ENCODE measurements at regions of chr2 and their contacts with region 1.

Region 1: DNA sequence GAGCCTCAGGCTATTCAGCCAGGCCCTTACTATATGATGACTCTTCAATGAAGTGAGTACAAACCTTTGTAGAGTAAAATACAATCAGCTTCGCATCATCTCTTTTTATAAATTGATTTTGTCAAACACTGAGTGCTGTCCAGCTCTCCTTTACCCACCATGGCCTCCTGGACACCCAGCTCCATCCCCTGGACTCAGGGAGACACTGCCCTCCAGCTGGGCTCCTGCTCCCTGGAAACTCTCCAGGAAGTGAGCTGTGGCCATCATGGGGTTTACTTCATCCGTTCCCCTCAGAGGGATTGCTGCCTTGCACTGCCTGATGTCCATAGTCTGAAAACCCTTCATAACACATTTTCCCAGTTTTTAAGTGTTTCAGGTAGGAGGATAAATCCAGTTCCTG is 82.5 kb upstream of the XIRP2 start:
- DNase-seq: peak; percentile 24
- ATAC-seq: peak; percentile 96
- H3K4me3 ChIP-seq: no peak overlapping the region
- H3K27ac ChIP-seq: no peak overlapping the region
- H3K4me1 ChIP-seq: no peaks in the 10 kb centered on the region
- H3K27me3 ChIP-seq: no peaks in the 10 kb centered on the region
- CTCF ChIP-seq: peak; percentile 81
- EP300 ChIP-seq: no peak
- POLR2A ChIP-seq: no peak
- RAD21 ChIP-seq: peak; percentile 70

Region 2: GRCh38 chr2:166627893-166628292 is 177.9 kb before region 1 on chr2:
- CTCF ChIA-PET with region 1: no interaction called
- POLR2A ChIA-PET with region 1: no interaction called
- in situ Hi-C with region 1: no loop called
- intact Hi-C with region 1: loop called (anchors 5 kb)
- DNase-seq: no peak
- ATAC-seq: peak; percentile 59
- H3K4me3 ChIP-seq: no peak overlapping the region
- H3K27ac ChIP-seq: no peak overlapping the region
- H3K4me1 ChIP-seq: no peaks in the 10 kb centered on the region
- H3K27me3 ChIP-seq: no peaks in the 10 kb centered on the region
- CTCF ChIP-seq: peak; percentile 29
- EP300 ChIP-seq: no peak
- POLR2A ChIP-seq: no peak
- RAD21 ChIP-seq: no peak

Region 3: DNA sequence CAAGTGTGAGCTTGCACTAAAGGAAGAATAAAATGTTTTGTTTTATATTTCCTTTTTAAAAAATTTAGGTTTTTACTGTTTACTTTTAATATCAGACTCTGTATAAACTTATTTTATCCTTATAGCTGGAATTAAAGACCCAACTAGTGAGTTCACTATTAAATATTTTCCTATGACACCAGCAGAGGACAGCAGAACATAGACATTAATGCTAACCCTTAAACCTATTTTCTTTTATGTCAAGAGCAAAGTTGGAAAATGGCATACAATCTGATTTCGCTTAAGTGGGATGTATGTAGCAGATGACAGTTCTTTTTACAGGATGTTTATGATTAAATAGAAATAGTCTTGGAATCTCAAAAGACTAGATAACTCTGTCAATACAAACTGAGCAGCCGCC is 105.7 kb before region 1 on chr2:
- CTCF ChIA-PET with region 1: no interaction called
- POLR2A ChIA-PET with region 1: no interaction called
- in situ Hi-C with region 1: no loop called
- intact Hi-C with region 1: loop called (anchors 5 kb)
- DNase-seq: no peak
- ATAC-seq: no peak
- H3K4me3 ChIP-seq: no peak overlapping the region
- H3K27ac ChIP-seq: no peak overlapping the region
- H3K4me1 ChIP-seq: no peaks in the 10 kb centered on the region
- H3K27me3 ChIP-seq: no peaks in the 10 kb centered on the region
- CTCF ChIP-seq: peak; percentile 56
- EP300 ChIP-seq: no peak
- POLR2A ChIP-seq: no peak
- RAD21 ChIP-seq: no peak

Region 4: DNA sequence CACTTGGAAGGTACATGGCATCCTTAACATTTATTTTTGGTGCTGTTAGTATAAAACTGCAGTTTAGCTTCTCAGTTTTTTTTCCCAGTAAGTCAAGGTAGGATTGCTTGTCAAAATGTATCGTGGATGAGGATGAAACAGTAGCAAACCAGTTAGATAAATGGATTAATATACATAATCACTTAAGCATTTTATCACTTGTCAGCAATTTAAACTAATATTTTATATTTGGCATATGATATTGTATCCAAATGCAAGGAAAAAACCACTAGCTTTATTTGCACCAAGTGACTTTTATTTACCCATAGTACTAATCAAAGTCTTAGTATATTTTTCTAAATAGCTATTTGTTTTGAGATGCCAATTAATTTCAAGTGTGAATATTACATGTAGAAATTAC is 55.1 kb before region 1 on chr2:
- CTCF ChIA-PET with region 1: no interaction called
- POLR2A ChIA-PET with region 1: no interaction called
- in situ Hi-C with region 1: no loop called
- intact Hi-C with region 1: no loop called
- DNase-seq: no peak
- ATAC-seq: no peak
- H3K4me3 ChIP-seq: no peak overlapping the region
- H3K27ac ChIP-seq: no peak overlapping the region
- H3K4me1 ChIP-seq: no peaks in the 10 kb centered on the region
- H3K27me3 ChIP-seq: no peaks in the 10 kb centered on the region; a peak in 1 of 5 replicates
- CTCF ChIP-seq: no peak
- EP300 ChIP-seq: no peak
- POLR2A ChIP-seq: no peak
- RAD21 ChIP-seq: no peak

Region 5: GRCh38 chr2:167190053-167190452 is 384.3 kb after region 1 on chr2:
- CTCF ChIA-PET with region 1: no interaction called
- POLR2A ChIA-PET with region 1: no interaction called
- in situ Hi-C with region 1: no loop called
- intact Hi-C with region 1: no loop called
- DNase-seq: no peak
- ATAC-seq: no peak
- H3K4me3 ChIP-seq: no peak overlapping the region
- H3K27ac ChIP-seq: no peak overlapping the region
- H3K4me1 ChIP-seq: no peaks in the 10 kb centered on the region
- H3K27me3 ChIP-seq: no peaks in the 10 kb centered on the region
- CTCF ChIP-seq: no peak
- EP300 ChIP-seq: no peak
- POLR2A ChIP-seq: no peak
- RAD21 ChIP-seq: no peak

Measured in HepG2 (cell line).